Sigmoid colon (tissue), 7 donors: ENCODE measurements at regions of chr10 and their contacts with region 1.

Region 1: DNA sequence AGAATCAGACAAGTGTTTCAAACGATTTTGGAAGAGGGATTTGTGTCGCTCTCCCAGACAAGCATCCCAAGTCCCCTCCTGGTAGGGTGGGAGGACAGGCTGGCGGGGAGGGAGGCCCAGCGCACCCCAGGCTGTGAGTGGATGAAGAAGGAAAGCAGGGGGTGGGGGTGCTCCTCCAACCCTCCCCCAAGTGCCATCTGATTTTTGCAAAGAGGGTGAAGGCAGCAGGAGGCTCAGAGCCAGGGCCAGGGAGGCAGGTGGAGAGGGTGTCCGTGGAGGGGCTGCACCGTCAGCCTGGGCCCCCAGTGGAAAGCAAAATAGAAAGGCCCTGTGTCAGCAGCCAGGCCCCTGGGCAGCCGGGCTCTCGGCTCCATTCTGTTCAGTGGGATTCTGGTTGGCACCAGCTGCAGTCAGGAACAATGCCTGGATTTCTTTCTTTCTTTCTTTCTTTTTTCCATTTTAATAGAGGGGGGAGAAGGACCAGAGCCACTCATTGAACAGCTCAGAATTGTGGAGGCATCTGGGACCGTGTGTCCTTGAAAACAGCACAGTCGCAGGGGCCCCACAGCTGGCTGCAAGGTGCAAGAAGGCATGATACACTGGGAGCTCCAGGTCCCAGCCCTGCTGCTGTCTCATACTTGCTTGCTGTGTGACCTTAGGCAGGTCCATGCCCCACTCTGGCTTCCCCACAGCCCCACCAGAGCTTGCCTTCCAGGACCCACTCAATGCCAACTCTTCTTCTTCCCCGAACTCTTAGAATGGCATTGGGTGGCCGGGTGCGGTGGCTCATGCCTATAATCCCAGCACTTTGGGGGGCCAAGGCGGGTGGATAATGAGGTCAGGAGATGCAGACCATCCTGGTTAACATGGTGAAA is 7.1 kb upstream of the ZMIZ1 start:
- DNase-seq: peak; percentile 64
- H3K4me3 ChIP-seq: no peak overlapping the region
- H3K27ac ChIP-seq: no peak overlapping the region
- H3K4me1 ChIP-seq: peaks cover 0 to 22% (median 14%) of the 10 kb centered on the region in 4 donors
- H3K27me3 ChIP-seq: no peaks in the 10 kb centered on the region
- CTCF ChIP-seq: no peak
- EP300 ChIP-seq: no peak
- POLR2A ChIP-seq: no peak

Region 2: GRCh38 chr10:78295242-78295641 is 766.4 kb before region 1 on chr10:
- intact Hi-C with region 1: loop called (anchors 2 kb)
- DNase-seq: peak; percentile 27
- H3K4me3 ChIP-seq: no peak overlapping the region
- H3K27ac ChIP-seq: peak overlapping the region; percentile 50 to 73 (median 70)
- H3K4me1 ChIP-seq: peaks cover 0 to 50% (median 26%) of the 10 kb centered on the region in 4 donors
- H3K27me3 ChIP-seq: no peaks in the 10 kb centered on the region
- CTCF ChIP-seq: no peak
- EP300 ChIP-seq: no peak
- POLR2A ChIP-seq: no peak